CD4-positive, alpha-beta memory T cell (primary cell): ENCODE measurements at regions of chr21 and their contacts with region 1.

Region 1: DNA sequence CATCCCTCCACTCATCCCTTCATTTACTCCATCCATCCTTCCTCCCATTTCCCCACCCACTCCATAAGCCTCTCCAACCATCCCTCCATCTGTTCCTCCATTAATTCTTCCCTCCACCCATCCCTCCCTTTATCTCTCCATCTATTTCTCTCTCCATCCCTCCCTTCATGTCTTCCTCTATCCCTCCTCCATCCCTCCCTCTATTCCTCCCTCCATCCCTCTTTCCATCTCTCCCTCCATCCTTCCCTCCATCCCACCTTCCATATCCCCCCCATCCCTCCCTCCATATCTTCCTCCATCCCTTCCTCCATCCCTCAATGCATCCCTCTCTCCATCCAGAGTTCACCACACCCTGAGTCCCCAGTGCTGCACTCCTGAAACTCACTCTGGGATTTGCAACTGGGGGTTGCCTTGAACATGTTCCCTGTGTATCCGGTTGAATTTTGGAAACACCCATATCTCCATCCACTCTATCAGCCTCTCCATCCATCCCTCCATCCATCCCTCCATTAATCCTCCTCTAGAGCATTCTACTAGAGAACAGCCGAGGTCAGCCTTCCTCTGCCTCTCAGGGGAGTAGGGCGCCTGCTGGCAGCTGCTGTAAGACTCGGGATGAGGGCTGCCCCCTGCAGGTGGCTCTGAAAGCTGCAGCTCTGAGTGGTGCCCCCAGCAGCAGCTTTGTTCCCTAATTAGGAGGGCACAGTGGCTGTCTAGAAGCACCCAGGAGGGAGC is 39.4 kb downstream of the ABCG1 start:
- DNase-seq: peak; percentile 77 to 81 (median 78)
- H3K4me3 ChIP-seq: no peak overlapping the region
- H3K4me3 Mint-ChIP-seq: peak overlapping the region in 1 of 8 donors; percentile 37
- H3K27ac ChIP-seq: no peak overlapping the region
- H3K27ac Mint-ChIP-seq: peak overlapping the region in 6 of 7 donors; percentile 10 to 78 (median 48)
- H3K4me1 ChIP-seq: peaks cover 15% of the 10 kb centered on the region
- H3K4me1 Mint-ChIP-seq: peaks cover 19 to 40% (median 30%) of the 10 kb centered on the region in 4 donors
- H3K27me3 ChIP-seq: no peaks in the 10 kb centered on the region
- H3K27me3 Mint-ChIP-seq: no peaks in the 10 kb centered on the region

Region 2: DNA sequence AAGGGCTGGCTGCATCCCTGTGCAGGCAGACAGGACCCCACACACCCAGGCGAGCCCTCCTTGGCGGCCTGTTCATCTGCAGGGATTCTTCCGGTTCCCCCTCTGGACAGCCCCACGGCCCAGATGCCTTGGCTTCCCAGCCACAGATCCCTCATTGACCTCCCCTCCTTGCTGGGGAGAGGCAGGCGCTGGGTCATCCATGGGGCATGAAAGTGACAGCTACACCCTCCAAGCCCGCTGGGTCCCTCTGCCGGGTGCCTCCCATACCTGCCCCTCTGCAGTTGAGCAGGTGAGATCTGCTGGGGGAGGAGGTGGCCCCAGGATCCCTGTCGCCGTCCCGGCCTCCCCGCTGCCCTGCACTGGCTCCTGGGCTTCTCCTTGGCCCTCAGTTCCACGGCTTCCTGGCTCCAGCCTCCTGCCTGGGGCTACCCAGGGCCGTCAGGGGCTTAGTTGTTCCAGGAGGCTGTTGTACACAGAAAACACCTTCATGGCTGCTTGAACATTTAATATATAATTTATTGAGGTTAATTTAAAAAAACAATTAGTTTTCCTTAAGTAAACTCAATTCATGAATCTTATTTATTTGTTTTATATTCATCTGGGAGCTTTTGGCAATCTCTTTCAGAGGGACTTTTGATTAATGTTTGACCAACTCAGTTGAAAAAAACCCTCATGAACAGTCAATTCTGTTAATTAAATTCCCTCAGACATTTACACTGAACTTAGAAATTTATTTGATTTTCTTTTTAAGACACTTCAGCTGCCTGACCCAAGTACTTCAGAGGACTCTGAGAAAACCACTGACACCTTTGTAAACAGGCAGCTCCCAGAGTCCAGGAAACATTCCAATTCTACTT is 107.0 kb before region 1 on chr21:
- CTCF ChIA-PET with region 1: interaction called, 217 read pairs
- POLR2A ChIA-PET with region 1: no interaction called
- intact Hi-C with region 1: no loop called
- DNase-seq: no peak
- H3K4me3 ChIP-seq: no peak overlapping the region
- H3K4me3 Mint-ChIP-seq: no peak overlapping the region
- H3K27ac ChIP-seq: no peak overlapping the region
- H3K27ac Mint-ChIP-seq: peak overlapping the region in 2 of 7 donors; percentile 23 to 68
- H3K4me1 ChIP-seq: no peaks in the 10 kb centered on the region
- H3K4me1 Mint-ChIP-seq: no peaks in the 10 kb centered on the region
- H3K27me3 ChIP-seq: no peaks in the 10 kb centered on the region
- H3K27me3 Mint-ChIP-seq: peaks cover 0 to 4% of the 10 kb centered on the region in 2 donors

Region 3: DNA sequence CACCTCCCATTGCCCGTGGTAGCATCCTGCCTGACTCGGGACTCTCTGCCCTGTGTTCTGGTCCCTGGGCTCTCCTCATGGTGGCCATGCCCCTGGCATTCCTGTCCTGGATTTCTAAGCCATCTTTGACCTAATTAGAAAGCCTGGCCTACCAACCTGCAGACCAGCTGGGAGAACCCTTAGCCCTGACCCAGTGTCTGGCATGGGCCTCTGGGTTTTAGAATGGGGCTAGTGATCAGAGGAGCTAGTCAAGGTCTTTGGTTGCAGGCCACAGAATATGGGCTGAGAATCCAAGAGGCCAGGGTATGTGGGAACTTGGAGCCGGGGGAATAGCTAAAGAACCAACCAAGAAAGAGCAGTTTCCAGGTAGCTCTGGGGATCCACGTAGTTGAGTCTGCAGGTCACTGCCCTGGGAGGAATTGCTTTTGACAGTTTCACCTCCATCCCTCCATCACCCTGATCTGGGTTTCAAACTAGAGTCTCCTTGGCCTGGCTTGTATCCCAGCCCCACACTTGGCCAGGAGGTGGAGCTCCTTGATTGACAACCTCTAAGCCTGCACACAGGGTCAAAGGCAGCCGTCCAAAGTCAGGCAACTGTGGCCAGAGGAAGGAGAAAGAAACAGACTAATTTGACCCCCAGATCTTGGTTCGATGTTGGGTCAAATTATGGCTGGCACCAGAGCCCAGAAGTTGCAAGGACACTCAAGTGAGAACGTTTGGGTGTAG is 94.1 kb before region 1 on chr21:
- CTCF ChIA-PET with region 1: interaction called, 157 read pairs
- POLR2A ChIA-PET with region 1: interaction called, 10 read pairs
- intact Hi-C with region 1: loop called (anchors 1 kb)
- DNase-seq: peak; percentile 42 to 58 (median 51)
- H3K4me3 ChIP-seq: no peak overlapping the region
- H3K4me3 Mint-ChIP-seq: peak overlapping the region in 1 of 8 donors; percentile 21
- H3K27ac ChIP-seq: no peak overlapping the region
- H3K27ac Mint-ChIP-seq: peak overlapping the region in 3 of 7 donors; percentile 42 to 64 (median 59)
- H3K4me1 ChIP-seq: peaks cover 10% of the 10 kb centered on the region
- H3K4me1 Mint-ChIP-seq: peaks cover 8 to 40% (median 20%) of the 10 kb centered on the region in 4 donors
- H3K27me3 ChIP-seq: no peaks in the 10 kb centered on the region
- H3K27me3 Mint-ChIP-seq: no peaks in the 10 kb centered on the region

Region 4: GRCh38 chr21:42220138-42220701 is 38.1 kb before region 1 on chr21:
- CTCF ChIA-PET with region 1: interaction called, 29 read pairs
- POLR2A ChIA-PET with region 1: interaction called, 3 read pairs
- intact Hi-C with region 1: no loop called
- DNase-seq: peak; percentile 89 to 96 (median 92)
- H3K4me3 ChIP-seq: peak overlapping the region; percentile 80 to 91
- H3K4me3 Mint-ChIP-seq: peak overlapping the region; percentile 86 to 100 (median 96)
- H3K27ac ChIP-seq: peak overlapping the region; percentile 84
- H3K27ac Mint-ChIP-seq: peak overlapping the region; percentile 87 to 100 (median 96)
- H3K4me1 ChIP-seq: peaks cover 27% of the 10 kb centered on the region
- H3K4me1 Mint-ChIP-seq: peaks cover 20 to 44% (median 28%) of the 10 kb centered on the region in 4 donors
- H3K27me3 ChIP-seq: no peaks in the 10 kb centered on the region
- H3K27me3 Mint-ChIP-seq: no peaks in the 10 kb centered on the region

Region 5: DNA sequence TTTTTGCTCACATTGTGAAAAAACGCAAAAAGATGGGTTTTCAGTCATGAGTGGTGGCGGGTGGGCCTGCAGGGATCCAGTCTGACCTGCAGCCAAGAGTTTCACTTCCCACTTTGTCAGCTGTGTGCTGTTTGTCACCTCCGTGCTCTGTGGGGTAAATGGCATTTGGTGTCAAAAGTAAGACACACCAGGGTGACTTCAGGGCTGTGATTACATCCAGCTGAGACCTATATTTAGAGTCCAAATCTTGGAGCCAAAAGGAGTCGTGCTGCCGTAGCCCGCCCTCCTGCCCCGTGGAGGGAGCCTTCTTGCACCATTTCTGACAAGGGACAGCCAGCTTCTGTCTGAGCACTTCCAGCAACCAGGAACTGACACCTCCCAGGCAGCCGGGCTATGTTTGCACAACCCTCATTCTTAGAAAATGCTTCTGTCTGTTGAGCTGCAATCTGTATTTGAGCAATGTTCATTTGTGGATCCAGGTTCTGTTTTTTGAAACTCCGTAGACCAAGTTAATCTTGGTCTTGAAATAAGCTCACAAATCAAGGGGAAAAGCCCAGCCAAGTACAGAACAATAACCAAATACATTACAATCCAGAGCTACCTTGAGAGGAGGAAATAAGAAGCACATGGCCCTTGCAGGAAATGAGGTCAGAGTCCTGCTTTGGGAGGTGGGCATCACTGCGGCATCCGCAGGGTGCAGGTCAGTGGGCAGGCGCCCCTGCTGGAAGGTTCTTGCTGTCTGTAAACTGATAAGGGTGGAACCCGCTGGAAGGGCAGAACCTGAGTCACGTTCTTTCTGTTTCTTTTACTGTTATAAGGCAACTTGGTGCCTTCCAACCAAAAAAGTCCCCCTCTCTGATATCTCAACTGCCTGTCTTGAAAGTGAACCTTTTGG is 25.0 kb before region 1 on chr21:
- CTCF ChIA-PET with region 1: interaction called, 55 read pairs
- POLR2A ChIA-PET with region 1: interaction called, 4 read pairs
- intact Hi-C with region 1: loop called (anchors 1 kb)
- DNase-seq: peak; percentile 82 to 98 (median 86)
- H3K4me3 ChIP-seq: no peak overlapping the region
- H3K4me3 Mint-ChIP-seq: peak overlapping the region; percentile 66 to 85 (median 78)
- H3K27ac ChIP-seq: peak overlapping the region; percentile 96
- H3K27ac Mint-ChIP-seq: peak overlapping the region; percentile 93 to 99 (median 97)
- H3K4me1 ChIP-seq: peaks cover 96% of the 10 kb centered on the region
- H3K4me1 Mint-ChIP-seq: peaks cover 61 to 99% (median 89%) of the 10 kb centered on the region in 4 donors
- H3K27me3 ChIP-seq: no peaks in the 10 kb centered on the region
- H3K27me3 Mint-ChIP-seq: no peaks in the 10 kb centered on the region

Region 6: GRCh38 chr21:42245331-42246193 is 12.8 kb before region 1 on chr21:
- CTCF ChIA-PET with region 1: interaction called, 34 read pairs
- POLR2A ChIA-PET with region 1: interaction called, 3 read pairs
- intact Hi-C with region 1: no loop called
- DNase-seq: no peak
- H3K4me3 ChIP-seq: no peak overlapping the region
- H3K4me3 Mint-ChIP-seq: no peak overlapping the region
- H3K27ac ChIP-seq: no peak overlapping the region
- H3K27ac Mint-ChIP-seq: peak overlapping the region in 3 of 7 donors; percentile 23 to 83 (median 26)
- H3K4me1 ChIP-seq: no peaks in the 10 kb centered on the region
- H3K4me1 Mint-ChIP-seq: peaks cover 26 to 33% (median 28%) of the 10 kb centered on the region in 4 donors
- H3K27me3 ChIP-seq: no peaks in the 10 kb centered on the region
- H3K27me3 Mint-ChIP-seq: no peaks in the 10 kb centered on the region

Region 7: GRCh38 chr21:42330380-42331359 is 72.4 kb after region 1 on chr21:
- CTCF ChIA-PET with region 1: no interaction called
- POLR2A ChIA-PET with region 1: no interaction called
- intact Hi-C with region 1: no loop called
- DNase-seq: no peak
- H3K4me3 ChIP-seq: no peak overlapping the region
- H3K4me3 Mint-ChIP-seq: no peak overlapping the region
- H3K27ac ChIP-seq: no peak overlapping the region
- H3K27ac Mint-ChIP-seq: no peak overlapping the region
- H3K4me1 ChIP-seq: no peaks in the 10 kb centered on the region
- H3K4me1 Mint-ChIP-seq: no peaks in the 10 kb centered on the region
- H3K27me3 ChIP-seq: no peaks in the 10 kb centered on the region
- H3K27me3 Mint-ChIP-seq: peaks cover 2% of the 10 kb centered on the region in 2 donors